OCI-LY7 (cell line): ENCODE measurements at regions of chr11 and their contacts with region 1.

Region 1: DNA sequence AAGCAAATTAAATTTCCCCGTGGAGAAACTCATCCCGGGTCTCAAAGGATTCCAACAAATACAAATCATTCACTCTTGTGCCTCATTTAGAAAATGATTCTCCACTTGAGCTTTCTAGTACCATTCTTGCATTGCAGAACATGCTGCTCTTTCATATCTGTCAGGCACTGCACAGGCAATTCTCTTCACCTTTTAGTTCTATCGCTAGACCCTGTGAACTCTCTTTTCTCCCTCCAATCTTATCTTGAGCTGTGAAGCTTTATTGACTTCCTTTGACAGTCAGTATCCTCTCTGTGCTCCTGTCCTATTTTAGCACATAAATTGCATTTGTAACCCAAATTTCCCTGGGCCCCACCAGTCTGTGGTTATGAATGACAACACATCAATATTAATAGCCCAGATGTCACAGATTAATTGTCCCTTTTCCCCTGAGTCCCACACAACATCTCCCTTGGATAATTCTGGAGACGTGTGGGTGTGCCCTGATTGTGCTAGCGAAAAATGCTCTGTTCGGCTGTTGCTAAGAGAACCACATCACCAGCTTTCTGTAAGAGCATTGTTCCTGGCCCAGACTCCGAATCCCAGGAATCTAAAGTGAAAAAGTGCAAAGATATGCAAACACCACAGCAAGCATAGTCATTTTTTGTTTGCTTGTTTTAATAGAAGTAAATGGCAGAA is 22.4 kb upstream of the SC5D start:
- DNase-seq: no peak
- H3K4me3 ChIP-seq: no peak overlapping the region
- H3K27ac ChIP-seq: no peak overlapping the region
- H3K4me1 ChIP-seq: no peaks in the 10 kb centered on the region
- CTCF ChIP-seq: no peak

Region 2: GRCh38 chr11:121207485-121208115 is 62.5 kb before region 1 on chr11:
- CTCF ChIA-PET with region 1: no interaction called
- POLR2A ChIA-PET with region 1: no interaction called
- intact Hi-C with region 1: no loop called
- DNase-seq: no peak
- H3K4me3 ChIP-seq: no peak overlapping the region
- H3K27ac ChIP-seq: no peak overlapping the region
- H3K4me1 ChIP-seq: no peaks in the 10 kb centered on the region
- CTCF ChIP-seq: no peak

Region 3: DNA sequence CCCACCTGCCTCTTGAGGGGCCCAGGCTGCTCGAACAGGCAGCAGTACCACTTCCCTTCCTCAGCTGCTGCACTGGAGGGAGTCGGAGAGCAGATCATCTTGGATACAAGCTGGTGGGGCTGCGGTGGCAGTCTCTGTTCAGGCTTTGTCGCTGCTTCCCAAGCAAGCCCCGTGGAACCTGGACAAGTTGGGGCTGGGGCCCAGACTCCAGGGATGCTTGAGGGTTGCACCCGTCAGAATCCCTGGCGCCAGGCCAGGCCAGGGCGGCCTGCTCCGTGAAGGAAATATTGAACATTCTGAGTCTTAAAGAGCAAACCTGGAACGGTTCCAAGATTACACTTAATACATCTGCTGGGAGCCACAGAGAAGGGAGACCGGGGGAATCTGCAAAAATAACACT is 492.7 kb after region 1 on chr11:
- CTCF ChIA-PET with region 1: no interaction called
- POLR2A ChIA-PET with region 1: interaction called, 10 read pairs
- intact Hi-C with region 1: no loop called
- DNase-seq: peak; percentile 23
- H3K4me3 ChIP-seq: no peak overlapping the region
- H3K27ac ChIP-seq: no peak overlapping the region
- H3K4me1 ChIP-seq: peaks cover 18% of the 10 kb centered on the region
- CTCF ChIP-seq: no peak